HEK293 (cell line): ENCODE measurements at regions of chr5 and their contacts with region 1.

Region 1: DNA sequence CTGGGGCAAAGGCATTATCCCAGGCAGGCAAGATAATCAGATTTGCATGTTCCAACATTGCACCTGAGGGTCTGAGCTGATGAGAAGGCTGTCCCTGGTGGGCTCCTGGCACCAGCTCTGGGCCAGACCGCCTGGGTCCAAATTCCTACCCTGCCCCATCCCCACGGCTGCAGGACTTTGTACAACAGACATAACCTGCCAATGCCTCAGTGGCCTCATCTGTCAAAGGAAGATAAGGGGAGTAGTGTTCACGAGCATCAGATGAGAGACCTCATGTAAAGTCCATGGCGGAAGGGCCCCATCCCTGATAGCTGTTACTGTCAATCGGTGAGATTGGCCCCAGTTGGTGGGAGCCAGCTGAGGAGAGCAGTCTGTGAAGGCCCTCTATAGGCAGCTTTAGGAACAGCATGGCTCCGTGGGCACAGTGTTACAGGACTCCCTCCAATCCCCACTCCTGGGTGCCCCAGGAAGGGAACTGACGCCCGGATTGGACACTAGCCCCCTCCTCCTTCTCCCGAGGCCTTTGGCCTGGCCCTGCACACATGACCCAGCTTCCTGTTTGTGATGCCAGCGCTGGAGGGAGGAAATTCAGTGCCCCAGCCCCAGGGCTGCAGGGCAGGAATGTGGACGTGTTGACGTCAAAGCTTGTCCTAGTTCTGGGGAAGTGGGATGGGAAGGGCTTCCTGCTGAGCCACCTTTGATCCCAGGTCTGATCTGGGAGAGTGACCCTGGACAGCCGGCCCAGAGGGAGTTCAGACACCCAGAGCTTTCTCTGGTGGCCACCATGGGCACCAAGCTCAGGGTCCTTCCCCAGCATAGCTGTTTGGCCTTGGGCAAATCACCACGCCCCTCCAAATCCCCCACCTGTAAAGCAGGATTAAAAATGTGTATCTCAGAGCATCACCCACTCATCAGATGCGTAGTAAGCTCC is 56.2 kb downstream of the DUSP1 start:
- H3K4me3 ChIP-seq: no peak overlapping the region
- H3K27ac ChIP-seq: no peak overlapping the region
- H3K4me1 ChIP-seq: no peaks in the 10 kb centered on the region
- CTCF ChIP-seq: peak; percentile 68; the same call in 1 of the 2 replicates

Region 2: GRCh38 chr5:172697123-172698121 is 17.3 kb before region 1 on chr5:
- CTCF ChIA-PET with region 1: interaction called, 11 read pairs
- POLR2A ChIA-PET with region 1: no interaction called
- H3K4me3 ChIP-seq: peak overlapping the region; percentile 34
- H3K27ac ChIP-seq: no peak overlapping the region
- H3K4me1 ChIP-seq: no peaks in the 10 kb centered on the region
- CTCF ChIP-seq: peak; percentile 88

Region 3: DNA sequence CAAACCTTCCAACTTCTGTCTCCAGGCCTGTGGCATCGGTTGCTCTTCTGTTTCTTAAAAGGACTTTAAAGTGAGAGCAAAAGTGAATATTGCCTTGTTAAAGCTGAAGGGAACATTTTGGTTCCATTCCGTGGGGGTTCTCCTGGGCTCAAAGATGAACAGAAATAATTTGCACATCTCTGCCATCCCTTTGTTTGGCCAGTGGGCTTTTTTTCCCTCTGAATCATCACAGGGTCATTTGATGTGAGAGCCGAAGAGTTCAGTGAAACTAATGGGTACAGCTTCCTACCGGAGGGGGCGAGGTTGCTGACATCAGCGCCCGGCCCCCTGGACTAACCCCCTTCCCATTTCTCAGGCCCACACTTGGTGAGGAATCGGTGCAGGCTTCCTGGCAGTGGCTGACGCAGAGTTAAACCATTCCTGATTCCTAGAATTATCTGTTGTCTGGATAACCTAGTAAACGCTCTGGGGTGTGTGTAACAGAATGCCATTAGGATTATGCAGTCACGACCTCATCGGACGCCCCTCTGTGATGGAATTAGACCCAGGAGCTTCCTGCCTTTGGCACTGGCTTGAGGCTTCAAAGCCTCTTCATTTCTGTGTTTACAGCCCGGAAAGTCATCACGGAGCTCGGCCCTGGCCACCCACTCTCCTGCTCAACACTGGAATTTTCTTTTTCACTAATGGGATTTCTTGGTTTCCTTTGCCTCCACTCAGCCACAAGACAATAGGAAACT is 182.9 kb after region 1 on chr5:
- CTCF ChIA-PET with region 1: interaction called, 14 read pairs
- POLR2A ChIA-PET with region 1: no interaction called
- H3K4me3 ChIP-seq: no peak overlapping the region
- H3K27ac ChIP-seq: no peak overlapping the region
- H3K4me1 ChIP-seq: no peaks in the 10 kb centered on the region
- CTCF ChIP-seq: no peak

Region 4: DNA sequence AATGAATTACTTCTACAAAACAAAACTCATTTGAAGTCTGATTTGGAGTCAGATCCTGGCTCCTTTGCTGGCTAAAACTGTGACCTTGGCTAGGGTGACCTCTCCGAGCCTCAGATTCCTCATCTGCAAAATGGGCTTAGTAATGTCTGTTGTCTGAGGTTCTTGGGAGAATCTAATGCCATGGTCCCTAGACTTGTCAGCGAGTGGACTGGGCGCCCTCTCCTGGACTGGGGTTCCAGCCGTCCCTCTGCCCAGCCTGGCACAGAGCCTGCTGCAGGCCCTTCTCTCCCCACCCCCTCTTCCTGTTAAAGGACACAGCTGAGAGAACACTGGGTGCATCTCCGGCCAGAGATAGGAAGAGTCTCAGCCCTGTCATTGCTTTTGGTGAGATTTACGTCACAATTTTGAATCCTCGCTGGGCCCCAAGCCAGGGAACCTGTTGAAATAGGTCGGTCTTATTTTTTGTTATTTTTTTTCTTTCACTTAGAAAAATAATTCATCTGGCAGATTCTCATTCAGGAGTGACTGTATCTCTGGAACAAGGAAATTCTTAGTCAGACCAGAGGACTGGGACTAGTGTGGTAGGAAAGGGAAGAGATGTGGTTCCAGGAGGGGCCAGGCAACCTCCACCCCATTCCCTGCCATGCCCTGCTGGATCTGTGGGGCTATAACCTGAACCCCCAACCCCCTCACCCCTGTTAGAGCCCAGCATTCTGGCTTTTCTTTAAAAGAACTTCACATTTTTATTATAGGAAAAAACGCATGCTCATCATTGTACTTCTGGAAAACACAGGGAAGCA is 196.3 kb after region 1 on chr5:
- CTCF ChIA-PET with region 1: interaction called, 17 read pairs
- POLR2A ChIA-PET with region 1: no interaction called
- H3K4me3 ChIP-seq: no peak overlapping the region
- H3K27ac ChIP-seq: no peak overlapping the region
- H3K4me1 ChIP-seq: no peaks in the 10 kb centered on the region
- CTCF ChIP-seq: peak; percentile 39; the same call in 1 of the 2 replicates

Region 5: GRCh38 chr5:172971482-172971881 is 256.7 kb after region 1 on chr5:
- CTCF ChIA-PET with region 1: interaction called, 10 read pairs
- POLR2A ChIA-PET with region 1: no interaction called
- H3K4me3 ChIP-seq: no peak overlapping the region
- H3K27ac ChIP-seq: no peak overlapping the region
- H3K4me1 ChIP-seq: no peaks in the 10 kb centered on the region
- CTCF ChIP-seq: no peak

Region 6: GRCh38 chr5:173196133-173196952 is 481.6 kb after region 1 on chr5:
- CTCF ChIA-PET with region 1: no interaction called
- POLR2A ChIA-PET with region 1: no interaction called
- H3K4me3 ChIP-seq: no peak overlapping the region
- H3K27ac ChIP-seq: no peak overlapping the region
- H3K4me1 ChIP-seq: no peaks in the 10 kb centered on the region
- CTCF ChIP-seq: no peak